Naive thymus-derived CD4-positive, alpha-beta T cell (primary cell): ENCODE measurements at regions of chr19 and their contacts with region 1.

Region 1: GRCh38 chr19:52734893-52735661 is at the start of gene ZNF611:
- DNase-seq: peak; percentile 97 to 100 (median 98)
- ATAC-seq: peak; percentile 98
- H3K4me3 ChIP-seq: peak within 1 kb of the TSS; percentile 99
- H3K4me3 Mint-ChIP-seq: peak within 1 kb of the TSS; percentile 85 to 96 (median 93)
- H3K27ac ChIP-seq: peak within 1 kb of the TSS; percentile 95
- H3K27ac Mint-ChIP-seq: peak within 1 kb of the TSS; percentile 92 to 98 (median 95)
- H3K4me1 ChIP-seq: peaks cover 0 to 8% of the 10 kb centered on the region in 2 donors
- H3K4me1 Mint-ChIP-seq: peaks cover 14 to 32% (median 24%) of the 10 kb centered on the region in 7 donors
- H3K27me3 ChIP-seq: no peaks in the 10 kb centered on the region
- H3K27me3 Mint-ChIP-seq: no peaks in the 10 kb centered on the region
- total RNA-seq, gene ZNF611: 23.4 to 56.0 (median 36.8) TPM

Region 2: DNA sequence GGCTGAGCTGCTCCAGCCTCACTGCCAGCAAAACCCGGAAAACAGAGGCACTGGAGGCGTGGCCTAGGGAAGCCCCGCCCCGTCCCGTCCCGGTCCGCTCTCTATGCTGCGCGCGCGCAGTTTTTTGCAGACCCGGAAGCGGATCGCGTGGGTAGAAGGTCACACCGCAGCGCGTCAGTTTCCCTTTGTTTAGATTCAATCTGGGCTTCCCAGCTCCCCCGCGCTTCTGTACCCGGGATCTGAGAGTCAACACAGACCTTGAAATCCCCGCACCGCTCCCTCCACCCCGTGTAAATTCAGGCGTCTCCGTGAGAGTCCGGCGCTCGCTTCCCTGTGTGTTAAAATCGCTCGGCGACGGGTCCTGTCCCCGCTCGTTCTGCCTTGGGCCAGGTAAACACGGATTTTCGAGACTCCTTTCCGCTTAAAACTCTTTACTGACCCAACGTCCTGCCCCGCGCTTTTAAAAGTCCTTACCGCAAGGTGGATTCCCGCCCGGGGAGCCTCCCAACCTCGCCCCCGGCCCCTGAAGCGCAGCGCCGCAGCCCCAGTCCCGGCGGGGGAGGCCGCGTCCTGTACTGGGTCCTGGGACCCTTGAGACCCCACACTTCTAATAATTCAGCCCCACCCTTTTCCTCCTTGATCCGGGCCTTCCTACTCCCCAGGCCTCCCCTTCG is 398.8 kb before region 1 on chr19 and contains the start of gene ZNF610:
- CTCF ChIA-PET with region 1: no interaction called
- POLR2A ChIA-PET with region 1: no interaction called
- intact Hi-C with region 1: loop called in 1 of 2 experiments (anchors 1 kb)
- DNase-seq: peak; percentile 73 to 88 (median 85)
- ATAC-seq: peak; percentile 99
- H3K4me3 ChIP-seq: peak within 1 kb of the TSS; percentile 88
- H3K4me3 Mint-ChIP-seq: peak within 1 kb of the TSS; percentile 87 to 97 (median 93)
- H3K27ac ChIP-seq: peak within 1 kb of the TSS; percentile 83
- H3K27ac Mint-ChIP-seq: peak within 1 kb of the TSS; percentile 81 to 98 (median 96)
- H3K4me1 ChIP-seq: peaks cover 0 to 6% of the 10 kb centered on the region in 2 donors
- H3K4me1 Mint-ChIP-seq: peaks cover 11 to 19% (median 16%) of the 10 kb centered on the region in 7 donors
- H3K27me3 ChIP-seq: no peaks in the 10 kb centered on the region
- H3K27me3 Mint-ChIP-seq: no peaks in the 10 kb centered on the region
- total RNA-seq, gene ZNF610: 0.42 to 4.3 (median 0.93) TPM

Region 3: GRCh38 chr19:52542984-52543664 is 192.0 kb before region 1 on chr19:
- CTCF ChIA-PET with region 1: no interaction called
- POLR2A ChIA-PET with region 1: no interaction called
- intact Hi-C with region 1: no loop called
- DNase-seq: peak in 1 of 9 donors; percentile 27
- ATAC-seq: peak; percentile 72
- H3K4me3 ChIP-seq: no peak overlapping the region
- H3K4me3 Mint-ChIP-seq: peak overlapping the region in 5 of 10 donors; percentile 6 to 74 (median 33)
- H3K27ac ChIP-seq: no peak overlapping the region
- H3K27ac Mint-ChIP-seq: peak overlapping the region in 5 of 9 donors; percentile 0 to 69 (median 49)
- H3K4me1 ChIP-seq: peaks cover 0 to 15% of the 10 kb centered on the region in 2 donors
- H3K4me1 Mint-ChIP-seq: peaks cover 10 to 25% (median 20%) of the 10 kb centered on the region in 7 donors
- H3K27me3 ChIP-seq: no peaks in the 10 kb centered on the region
- H3K27me3 Mint-ChIP-seq: no peaks in the 10 kb centered on the region

Region 4: DNA sequence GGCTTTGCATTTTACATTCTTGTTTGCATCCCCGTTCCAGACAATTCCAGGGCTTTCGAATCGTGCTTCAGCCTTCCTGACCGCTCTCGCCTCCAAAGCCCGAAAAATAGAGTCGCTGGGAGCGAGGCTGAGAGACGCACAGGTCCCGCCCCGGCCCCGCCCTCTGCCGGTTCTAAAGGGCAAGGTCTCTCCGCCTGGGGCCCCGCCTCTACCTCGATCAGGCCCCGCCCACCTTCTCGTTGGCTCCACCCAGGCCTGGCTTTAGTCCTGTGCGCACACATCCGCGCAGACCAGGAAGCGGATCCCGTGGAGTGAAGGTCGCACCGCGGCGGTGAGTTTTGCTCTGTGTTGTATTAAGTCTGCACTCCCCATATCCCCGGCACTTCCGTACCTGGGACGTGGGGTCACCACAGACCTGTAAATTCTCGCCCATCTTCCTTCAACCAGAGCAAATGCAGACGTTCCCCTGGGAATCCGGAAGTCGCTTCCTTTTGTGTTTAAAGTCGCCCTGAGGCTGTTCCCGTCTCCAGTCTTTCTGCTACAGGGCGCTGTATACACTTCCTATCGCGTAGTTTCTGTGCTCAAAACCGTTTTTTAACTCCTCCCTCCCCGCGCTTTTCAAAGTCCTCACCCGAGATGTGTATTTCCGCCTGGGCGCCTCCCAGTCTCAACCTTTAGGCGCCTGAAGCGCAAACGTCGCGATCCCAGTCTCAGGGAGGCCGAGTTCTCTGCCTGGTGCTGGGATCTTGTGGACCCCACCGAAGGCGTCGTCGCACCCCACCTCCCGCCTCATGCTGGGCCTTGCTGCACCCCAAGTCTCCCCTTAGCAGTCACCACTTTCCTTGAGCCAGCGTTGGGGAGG is 164.8 kb before region 1 on chr19 and contains the start of gene ZNF701:
- CTCF ChIA-PET with region 1: no interaction called
- POLR2A ChIA-PET with region 1: interaction called, 6 read pairs
- intact Hi-C with region 1: loop called (anchors 1 kb)
- DNase-seq: peak; percentile 92 to 99 (median 96)
- ATAC-seq: peak; percentile 100
- H3K4me3 ChIP-seq: peak within 1 kb of the TSS; percentile 78
- H3K4me3 Mint-ChIP-seq: peak within 1 kb of the TSS; percentile 88 to 99 (median 94)
- H3K27ac ChIP-seq: peak within 1 kb of the TSS; percentile 78
- H3K27ac Mint-ChIP-seq: peak within 1 kb of the TSS; percentile 92 to 98 (median 95)
- H3K4me1 ChIP-seq: peaks cover 10 to 13% of the 10 kb centered on the region in 2 donors
- H3K4me1 Mint-ChIP-seq: peaks cover 9 to 42% (median 37%) of the 10 kb centered on the region in 7 donors
- H3K27me3 ChIP-seq: no peaks in the 10 kb centered on the region
- H3K27me3 Mint-ChIP-seq: no peaks in the 10 kb centered on the region
- total RNA-seq, gene ZNF701: 11.7 to 43.3 (median 28.3) TPM

Region 5: GRCh38 chr19:52690369-52691214 is 44.5 kb before region 1 on chr19:
- CTCF ChIA-PET with region 1: no interaction called
- POLR2A ChIA-PET with region 1: no interaction called
- intact Hi-C with region 1: loop called (anchors 1 kb)
- DNase-seq: peak; percentile 81 to 91 (median 87)
- ATAC-seq: peak; percentile 99
- H3K4me3 ChIP-seq: peak overlapping the region; percentile 80
- H3K4me3 Mint-ChIP-seq: peak overlapping the region; percentile 92 to 99 (median 96)
- H3K27ac ChIP-seq: peak overlapping the region; percentile 85
- H3K27ac Mint-ChIP-seq: peak overlapping the region; percentile 89 to 97 (median 94)
- H3K4me1 ChIP-seq: peaks cover 6 to 9% of the 10 kb centered on the region in 2 donors
- H3K4me1 Mint-ChIP-seq: peaks cover 18 to 33% (median 30%) of the 10 kb centered on the region in 7 donors
- H3K27me3 ChIP-seq: no peaks in the 10 kb centered on the region
- H3K27me3 Mint-ChIP-seq: no peaks in the 10 kb centered on the region

Region 6: DNA sequence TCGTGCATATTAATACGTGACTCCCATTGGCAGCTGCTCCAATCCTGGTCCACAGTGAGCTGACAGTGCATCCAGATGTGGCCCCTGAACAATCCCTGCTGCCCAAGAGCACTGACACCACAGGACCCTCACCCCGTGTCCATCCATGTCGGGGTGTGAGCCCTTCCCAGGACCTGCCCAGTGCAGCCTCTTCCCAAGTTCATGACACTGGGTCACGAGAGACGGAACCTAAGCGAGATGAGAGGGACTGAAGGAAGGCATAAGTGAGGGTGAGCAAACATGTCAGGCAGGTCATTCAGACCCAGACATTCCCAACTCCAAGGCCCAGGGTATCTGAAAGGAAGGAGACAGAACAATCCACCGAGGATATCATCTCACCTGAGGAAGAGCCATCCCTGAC is 118.8 kb after region 1 on chr19:
- CTCF ChIA-PET with region 1: no interaction called
- POLR2A ChIA-PET with region 1: no interaction called
- intact Hi-C with region 1: loop called (anchors 1 to 2 kb)
- DNase-seq: no peak
- ATAC-seq: no peak
- H3K4me3 ChIP-seq: no peak overlapping the region
- H3K4me3 Mint-ChIP-seq: peak overlapping the region in 1 of 10 donors; percentile 53
- H3K27ac ChIP-seq: no peak overlapping the region
- H3K27ac Mint-ChIP-seq: no peak overlapping the region
- H3K4me1 ChIP-seq: no peaks in the 10 kb centered on the region
- H3K4me1 Mint-ChIP-seq: peaks cover 15 to 39% (median 32%) of the 10 kb centered on the region in 7 donors
- H3K27me3 ChIP-seq: no peaks in the 10 kb centered on the region
- H3K27me3 Mint-ChIP-seq: no peaks in the 10 kb centered on the region

Region 7: DNA sequence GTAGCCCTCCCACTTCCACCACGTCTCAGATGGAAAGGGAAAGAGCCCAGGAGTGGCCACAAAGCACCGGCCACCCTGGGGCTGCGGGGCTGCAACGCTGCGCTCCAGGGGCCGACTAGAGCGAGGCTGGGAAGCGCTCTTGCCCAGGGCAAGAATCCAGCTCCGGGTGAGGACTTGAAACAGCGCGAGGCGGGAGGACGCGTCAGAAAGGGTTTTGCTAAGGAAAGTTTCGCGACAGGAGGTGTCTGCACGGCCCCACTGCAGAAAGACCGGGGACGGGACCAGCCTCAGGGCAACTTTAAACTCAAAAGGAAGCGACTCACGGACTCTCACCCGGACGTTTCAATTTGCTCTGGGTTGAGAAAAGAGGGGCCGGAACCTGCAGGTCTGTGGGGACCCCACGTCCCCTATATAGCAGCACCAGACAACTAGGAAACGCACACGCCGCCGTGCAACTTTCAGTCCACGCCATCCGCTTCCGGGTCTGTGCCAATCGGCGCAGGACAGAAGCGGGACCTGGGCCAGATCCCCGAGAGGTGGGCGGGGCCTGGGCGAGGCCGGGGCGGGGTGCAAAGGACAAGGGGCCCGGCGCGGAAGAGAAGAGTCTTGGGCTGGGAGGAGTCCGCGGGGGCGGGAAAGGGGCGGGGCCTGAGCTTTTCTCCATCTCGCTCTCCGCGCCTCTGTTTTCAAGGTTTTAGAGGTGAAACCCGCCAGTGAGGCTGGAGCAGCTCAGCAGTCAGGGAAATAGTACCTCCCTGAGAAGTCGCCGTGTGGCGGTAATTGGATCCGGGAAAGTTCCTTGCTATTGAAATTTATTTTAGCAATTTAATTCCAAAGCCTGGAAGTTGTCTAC is 227.5 kb after region 1 on chr19 and contains the start of gene ZNF816:
- CTCF ChIA-PET with region 1: no interaction called
- POLR2A ChIA-PET with region 1: interaction called, 3 read pairs
- intact Hi-C with region 1: loop called in 1 of 2 experiments (anchors 1 kb)
- DNase-seq: peak; percentile 94 to 99 (median 98)
- ATAC-seq: peak; percentile 100
- H3K4me3 ChIP-seq: peak within 1 kb of the TSS; percentile 77
- H3K4me3 Mint-ChIP-seq: peak within 1 kb of the TSS; percentile 87 to 96 (median 94)
- H3K27ac ChIP-seq: peak within 1 kb of the TSS; percentile 73
- H3K27ac Mint-ChIP-seq: peak within 1 kb of the TSS; percentile 82 to 95 (median 93)
- H3K4me1 ChIP-seq: peaks cover 12 to 14% of the 10 kb centered on the region in 2 donors
- H3K4me1 Mint-ChIP-seq: peaks cover 15 to 33% (median 29%) of the 10 kb centered on the region in 7 donors
- H3K27me3 ChIP-seq: no peaks in the 10 kb centered on the region
- H3K27me3 Mint-ChIP-seq: no peaks in the 10 kb centered on the region
- total RNA-seq, gene ZNF816: 5.0 to 25.7 (median 11.0) TPM